GM12878 (cell line): ENCODE measurements at regions of chr11 and their contacts with region 1.

Region 1: GRCh38 chr11:45964911-45965389 is 42.5 kb downstream of the LARGE2 start:
- DNase-seq: peak; percentile 38
- ATAC-seq: peak; percentile 98
- H3K4me3 ChIP-seq: no peak overlapping the region
- H3K27ac ChIP-seq: no peak overlapping the region
- H3K4me1 ChIP-seq: no peaks in the 10 kb centered on the region
- H3K27me3 ChIP-seq: no peaks in the 10 kb centered on the region
- CTCF ChIP-seq: peak; percentile 85 to 97 (median 90)
- EP300 ChIP-seq: no peak
- POLR2A ChIP-seq: no peak
- RAD21 ChIP-seq: peak; percentile 81

Region 2: DNA sequence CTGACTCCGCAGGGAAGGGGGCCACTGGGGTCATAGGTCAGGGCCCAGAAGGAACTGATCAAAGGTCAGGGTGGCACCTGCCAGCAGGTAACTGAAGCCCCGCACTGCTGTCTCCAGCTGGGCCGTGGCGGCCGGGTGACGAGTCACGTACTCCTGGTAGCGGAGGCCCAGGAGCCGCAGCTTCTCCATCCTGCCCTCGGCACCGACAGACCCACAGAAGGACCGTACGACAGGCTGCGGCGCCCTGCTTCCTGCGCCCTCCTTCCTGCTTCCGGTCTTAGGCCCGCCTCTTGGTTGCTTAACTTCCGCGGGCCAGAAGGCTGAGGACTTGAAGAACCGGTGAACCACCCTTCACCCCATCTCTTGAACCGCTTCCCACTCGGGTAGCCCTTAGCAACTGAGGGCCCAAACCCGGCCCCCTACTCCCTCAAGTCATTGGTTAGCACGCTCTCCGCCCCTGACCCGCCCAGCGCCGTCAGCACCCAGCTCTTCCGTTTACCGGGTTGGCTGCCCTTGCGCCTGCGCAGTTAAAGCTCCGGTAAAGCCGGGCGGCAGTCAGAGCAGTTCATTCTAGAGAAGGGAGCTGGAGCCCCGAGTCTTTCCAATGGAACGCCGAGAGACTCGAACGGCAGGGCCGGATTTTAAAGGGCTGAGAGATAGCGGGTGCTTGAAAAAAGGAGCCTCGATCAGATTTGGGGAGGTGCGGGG is 47.2 kb before region 1 on chr11 and contains the start of gene PEX16:
- CTCF ChIA-PET with region 1: interaction called, 11 read pairs
- POLR2A ChIA-PET with region 1: no interaction called
- RAD21 ChIA-PET with region 1: interaction called, 4 read pairs
- SMC1A ChIA-PET with region 1: interaction called, 3 read pairs
- in situ Hi-C with region 1: no loop called
- intact Hi-C with region 1: no loop called
- DNase-seq: peak; percentile 94
- ATAC-seq: peak; percentile 92
- H3K4me3 ChIP-seq: peak within 1 kb of the TSS; percentile 99
- H3K27ac ChIP-seq: peak within 1 kb of the TSS; percentile 92
- H3K4me1 ChIP-seq: peaks cover 18% of the 10 kb centered on the region
- H3K27me3 ChIP-seq: peaks cover 2 to 4% of the 10 kb centered on the region in 2 experiments; a peak in 3 of 4 replicates
- CTCF ChIP-seq: no peak
- EP300 ChIP-seq: no peak; a peak in 1 of 4 replicates
- POLR2A ChIP-seq: peak; percentile 99
- RAD21 ChIP-seq: no peak
- polyA plus RNA-seq, gene PEX16: 1.4 to 5.6 TPM

Region 3: GRCh38 chr11:45949992-45950407 is 14.9 kb before region 1 on chr11:
- CTCF ChIA-PET with region 1: interaction called, 60 read pairs
- POLR2A ChIA-PET with region 1: interaction called, 3 read pairs
- RAD21 ChIA-PET with region 1: no interaction called
- SMC1A ChIA-PET with region 1: interaction called, 14 read pairs
- in situ Hi-C with region 1: no loop called
- intact Hi-C with region 1: no loop called
- DNase-seq: no peak
- ATAC-seq: no peak
- H3K4me3 ChIP-seq: no peak overlapping the region
- H3K27ac ChIP-seq: no peak overlapping the region
- H3K4me1 ChIP-seq: no peaks in the 10 kb centered on the region
- H3K27me3 ChIP-seq: no peaks in the 10 kb centered on the region
- CTCF ChIP-seq: no peak
- EP300 ChIP-seq: no peak
- POLR2A ChIP-seq: no peak
- RAD21 ChIP-seq: no peak

Region 4: DNA sequence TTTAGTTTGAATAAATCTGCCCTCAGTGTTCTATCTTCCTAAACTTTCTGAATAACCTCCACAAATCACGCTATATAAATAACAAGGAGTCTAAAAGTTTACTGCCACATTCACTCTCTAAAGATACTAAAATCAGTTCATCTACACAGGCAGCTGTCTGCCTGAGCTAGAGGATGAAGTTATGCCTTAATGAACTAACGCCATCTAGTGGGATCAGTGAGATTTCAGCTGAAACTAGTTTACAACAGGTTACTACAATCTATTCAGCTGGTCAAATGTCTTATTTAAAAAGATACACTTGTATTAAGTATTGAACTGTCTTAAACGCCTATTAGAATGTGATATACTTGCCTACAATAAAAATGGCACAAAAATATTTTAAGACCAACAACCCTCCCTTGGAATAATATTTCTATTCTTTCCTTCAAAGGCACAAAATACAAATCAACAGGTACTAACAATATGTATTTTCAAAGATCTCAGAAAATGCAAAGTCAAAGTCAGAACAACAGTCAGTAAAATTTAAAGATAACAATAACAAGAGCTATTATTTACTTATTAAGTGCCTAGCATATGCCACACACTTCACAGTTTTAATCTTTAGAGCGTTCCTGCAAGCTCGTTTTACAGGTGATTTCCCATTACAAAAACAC is 41.6 kb after region 1 on chr11:
- CTCF ChIA-PET with region 1: interaction called, 93 read pairs
- POLR2A ChIA-PET with region 1: interaction called, 6 read pairs
- RAD21 ChIA-PET with region 1: interaction called, 41 read pairs
- SMC1A ChIA-PET with region 1: interaction called, 21 read pairs
- in situ Hi-C with region 1: no loop called
- intact Hi-C with region 1: loop called (anchors 1 kb)
- DNase-seq: peak; percentile 37
- ATAC-seq: peak; percentile 96
- H3K4me3 ChIP-seq: no peak overlapping the region
- H3K27ac ChIP-seq: no peak overlapping the region
- H3K4me1 ChIP-seq: no peaks in the 10 kb centered on the region
- H3K27me3 ChIP-seq: no peaks in the 10 kb centered on the region
- CTCF ChIP-seq: peak; percentile 71 to 80 (median 72)
- EP300 ChIP-seq: no peak
- POLR2A ChIP-seq: no peak
- RAD21 ChIP-seq: peak; percentile 81

Region 5: DNA sequence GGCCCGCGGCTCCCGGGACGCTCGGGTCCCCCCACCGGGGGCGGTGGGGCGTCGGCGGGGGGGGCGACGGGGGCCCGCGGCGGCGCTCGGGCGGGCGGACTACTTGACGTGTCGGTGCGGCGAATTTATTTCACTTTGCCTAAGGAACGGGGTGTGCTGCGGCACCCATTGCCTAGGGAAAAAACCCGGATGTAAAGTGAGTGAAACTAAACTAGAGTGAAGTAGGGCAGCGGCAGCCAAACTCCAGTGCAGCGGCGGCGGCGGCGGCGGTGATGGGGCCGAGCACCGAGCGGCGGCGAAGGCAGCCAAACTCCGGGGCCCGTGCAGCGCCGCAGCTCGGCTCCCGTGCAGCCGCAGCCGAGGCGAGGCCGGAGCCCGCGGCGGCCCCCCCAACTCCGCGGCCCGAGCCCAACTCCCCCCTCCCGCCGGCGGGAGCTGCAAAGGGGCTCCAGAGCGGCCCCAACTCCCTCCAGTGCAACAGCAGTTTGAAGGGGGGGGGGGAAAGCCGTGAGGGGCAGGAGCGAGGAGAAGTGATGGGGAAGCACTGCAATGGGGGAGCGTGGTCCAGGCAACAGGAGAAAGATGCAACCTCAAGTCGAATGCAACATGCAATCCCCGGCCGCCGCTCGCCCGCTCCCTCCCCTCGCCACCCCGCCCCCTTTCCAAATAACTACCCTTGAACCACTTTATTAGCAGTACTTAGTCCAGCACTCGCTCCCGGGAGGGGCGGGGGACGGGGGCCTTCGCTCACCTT is 157.0 kb after region 1 on chr11:
- CTCF ChIA-PET with region 1: interaction called, 37 read pairs
- POLR2A ChIA-PET with region 1: no interaction called
- RAD21 ChIA-PET with region 1: interaction called, 10 read pairs
- SMC1A ChIA-PET with region 1: interaction called, 35 read pairs
- in situ Hi-C with region 1: no loop called
- intact Hi-C with region 1: no loop called
- DNase-seq: no peak
- ATAC-seq: peak; percentile 47
- H3K4me3 ChIP-seq: peak overlapping the region; percentile 95
- H3K27ac ChIP-seq: peak overlapping the region; percentile 34; the same call in 1 of the 2 replicates
- H3K4me1 ChIP-seq: peaks cover 3% of the 10 kb centered on the region; the same call in 1 of the 2 replicates
- H3K27me3 ChIP-seq: no peaks in the 10 kb centered on the region
- CTCF ChIP-seq: no peak
- EP300 ChIP-seq: no peak
- POLR2A ChIP-seq: peak; percentile 11
- RAD21 ChIP-seq: no peak

Region 6: GRCh38 chr11:46410021-46410420 is 445.1 kb after region 1 on chr11:
- CTCF ChIA-PET with region 1: no interaction called
- POLR2A ChIA-PET with region 1: no interaction called
- RAD21 ChIA-PET with region 1: no interaction called
- SMC1A ChIA-PET with region 1: no interaction called
- in situ Hi-C with region 1: no loop called
- intact Hi-C with region 1: no loop called
- DNase-seq: no peak
- ATAC-seq: no peak
- H3K4me3 ChIP-seq: no peak overlapping the region
- H3K27ac ChIP-seq: no peak overlapping the region
- H3K4me1 ChIP-seq: no peaks in the 10 kb centered on the region
- H3K27me3 ChIP-seq: no peaks in the 10 kb centered on the region
- CTCF ChIP-seq: peak in 1 of 3 experiments; percentile 26; a peak in 1 of 6 replicates
- EP300 ChIP-seq: no peak
- POLR2A ChIP-seq: no peak
- RAD21 ChIP-seq: peak; percentile 8; the same call in 1 of the 2 replicates